Aorta (tissue), 5 donors: ENCODE measurements at regions of chr16 and their contacts with region 1.

Region 1: DNA sequence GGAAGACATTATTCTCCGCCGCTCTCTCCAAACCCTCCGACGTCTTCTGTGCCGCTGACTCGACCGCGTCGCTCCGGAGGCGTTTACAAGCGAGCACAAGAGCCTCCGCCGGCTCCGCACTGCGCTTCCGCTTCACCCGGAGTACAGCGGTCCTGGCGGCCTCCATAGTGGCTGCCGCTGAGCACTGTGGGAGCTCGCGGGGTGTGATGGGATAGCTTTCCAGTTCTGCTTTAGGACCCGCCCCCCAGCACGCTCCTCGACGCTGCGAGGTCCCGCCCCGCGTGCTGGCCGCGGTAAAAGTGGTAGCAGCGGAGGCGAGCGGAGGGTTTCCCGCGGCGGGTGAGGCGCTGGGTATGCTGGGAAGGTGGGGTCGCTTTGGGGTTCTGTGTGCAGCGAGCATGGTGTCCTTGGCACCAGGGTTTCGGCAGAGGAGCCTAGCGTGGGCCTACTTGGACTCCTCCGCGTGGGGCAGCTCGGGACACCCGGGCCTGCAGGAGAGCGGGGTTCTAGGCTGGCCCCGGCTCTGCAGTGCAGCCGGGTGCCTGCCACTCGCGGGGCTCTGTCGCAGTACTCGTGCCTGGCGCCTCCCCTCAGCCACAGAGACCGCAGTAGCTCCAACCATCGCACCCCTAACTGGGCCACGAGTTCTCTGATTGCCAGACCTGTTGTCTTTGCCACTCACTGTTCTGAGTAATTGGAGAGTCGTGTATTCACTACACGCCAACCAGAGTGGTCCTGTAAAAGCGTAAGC is at the starts of genes PRMT7 and SLC7A6OS:
- DNase-seq: peak; percentile 94 to 96
- ATAC-seq: peak; percentile 99
- H3K4me3 ChIP-seq: peak within 1 kb of the TSS; percentile 73
- H3K27ac ChIP-seq: peak within 1 kb of the TSS in 1 of 2 donors; percentile 16
- H3K4me1 ChIP-seq: peaks cover 0 to 6% of the 10 kb centered on the region in 2 donors
- H3K27me3 ChIP-seq: no peaks in the 10 kb centered on the region
- total RNA-seq, gene PRMT7: 21.4 to 41.7 TPM
- total RNA-seq, gene SLC7A6OS: 13.7 to 21.1 TPM

Region 2: GRCh38 chr16:68244903-68245853 is 65.8 kb before region 1 on chr16 and contains the start of gene PLA2G15:
- intact Hi-C with region 1: loop called in 1 of 2 experiments (anchors 5 kb)
- DNase-seq: peak; percentile 98 to 100
- ATAC-seq: peak; percentile 98
- H3K4me3 ChIP-seq: peak within 1 kb of the TSS; percentile 58 to 88
- H3K27ac ChIP-seq: no peak within 1 kb of the TSS
- H3K4me1 ChIP-seq: no peaks in the 10 kb centered on the region
- H3K27me3 ChIP-seq: no peaks in the 10 kb centered on the region
- total RNA-seq, gene PLA2G15: 13.6 to 28.4 TPM

Region 3: DNA sequence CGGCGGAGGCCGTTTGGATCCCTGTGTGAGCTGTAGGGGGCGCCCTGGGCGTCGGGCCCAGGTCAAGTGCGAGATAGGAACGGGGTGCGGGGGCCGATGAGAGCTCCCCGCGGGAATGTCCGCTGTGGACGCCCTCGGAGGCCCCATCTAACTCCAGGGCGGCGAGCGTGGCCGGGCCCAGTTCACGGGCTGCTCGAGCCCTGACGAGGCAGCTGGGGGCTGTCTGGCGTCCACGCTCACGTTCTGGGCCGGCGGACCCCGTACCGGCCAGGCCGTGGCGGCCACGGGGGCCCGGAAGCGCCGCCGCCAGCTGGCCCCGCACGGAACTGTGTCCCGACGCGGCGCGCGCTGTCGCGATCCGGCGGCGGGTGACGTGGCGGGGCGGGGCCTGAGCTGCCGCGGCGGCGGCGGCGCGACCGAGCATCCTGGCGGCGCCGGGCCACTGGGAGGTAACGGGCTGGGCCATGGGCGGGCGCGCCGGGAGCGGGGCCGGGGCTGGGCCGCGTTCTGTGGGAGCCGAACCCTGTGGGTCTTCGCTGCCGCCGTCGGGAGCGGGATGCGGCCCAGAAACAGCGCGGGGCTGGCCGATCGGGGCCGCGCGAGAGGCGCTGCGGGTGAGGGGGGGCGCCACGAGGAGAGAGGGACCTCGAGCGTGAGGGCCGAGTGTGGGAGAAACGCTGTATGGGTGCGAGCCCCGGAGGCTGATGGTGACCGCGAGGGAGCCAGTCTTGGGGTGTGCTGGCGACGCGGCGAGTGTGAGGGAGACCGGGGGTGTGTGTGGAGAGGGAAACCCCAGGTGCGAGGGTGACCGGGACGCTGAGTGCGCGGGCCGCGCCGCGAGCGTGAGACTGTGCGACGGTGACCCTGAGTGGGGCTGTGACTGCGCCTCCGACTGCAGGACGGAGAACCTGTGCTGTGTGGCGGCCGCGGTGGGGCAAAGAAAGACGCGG is 46.5 kb before region 1 on chr16 and contains the start of gene SLC7A6:
- intact Hi-C with region 1: loop called (anchors 1 to 5 kb)
- DNase-seq: peak; percentile 84 to 95
- ATAC-seq: peak; percentile 76
- H3K4me3 ChIP-seq: peak within 1 kb of the TSS; percentile 37 to 46
- H3K27ac ChIP-seq: peak within 1 kb of the TSS; percentile 65 to 82
- H3K4me1 ChIP-seq: no peaks in the 10 kb centered on the region
- H3K27me3 ChIP-seq: no peaks in the 10 kb centered on the region
- total RNA-seq, gene SLC7A6: 47.0 to 52.4 TPM

Region 4: DNA sequence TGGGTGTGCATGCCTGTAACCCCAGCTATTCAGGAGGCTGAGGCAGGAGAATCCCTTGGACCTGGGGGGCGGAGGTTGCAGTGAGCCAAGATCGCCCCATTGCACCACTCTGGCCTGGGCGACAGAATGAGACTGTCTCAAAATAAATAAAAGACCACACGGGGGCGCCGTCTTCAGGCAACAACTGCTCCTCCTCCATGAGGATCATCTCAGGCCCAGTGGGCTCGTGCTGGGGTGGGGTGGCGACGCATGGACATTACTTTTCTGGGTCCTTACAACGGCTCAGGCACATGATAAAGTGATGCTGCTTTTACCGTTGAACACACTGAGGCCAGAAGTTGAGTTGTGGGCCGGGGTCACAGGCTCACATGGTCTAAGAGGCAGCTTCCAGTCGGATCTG is 56.1 kb after region 1 on chr16:
- intact Hi-C with region 1: no loop called
- DNase-seq: no peak
- ATAC-seq: no peak
- H3K4me3 ChIP-seq: no peak overlapping the region
- H3K27ac ChIP-seq: no peak overlapping the region
- H3K4me1 ChIP-seq: no peaks in the 10 kb centered on the region
- H3K27me3 ChIP-seq: no peaks in the 10 kb centered on the region